Naive thymus-derived CD4-positive, alpha-beta T cell (primary cell): ENCODE measurements at regions of chr21 and their contacts with region 1.

Region 1: DNA sequence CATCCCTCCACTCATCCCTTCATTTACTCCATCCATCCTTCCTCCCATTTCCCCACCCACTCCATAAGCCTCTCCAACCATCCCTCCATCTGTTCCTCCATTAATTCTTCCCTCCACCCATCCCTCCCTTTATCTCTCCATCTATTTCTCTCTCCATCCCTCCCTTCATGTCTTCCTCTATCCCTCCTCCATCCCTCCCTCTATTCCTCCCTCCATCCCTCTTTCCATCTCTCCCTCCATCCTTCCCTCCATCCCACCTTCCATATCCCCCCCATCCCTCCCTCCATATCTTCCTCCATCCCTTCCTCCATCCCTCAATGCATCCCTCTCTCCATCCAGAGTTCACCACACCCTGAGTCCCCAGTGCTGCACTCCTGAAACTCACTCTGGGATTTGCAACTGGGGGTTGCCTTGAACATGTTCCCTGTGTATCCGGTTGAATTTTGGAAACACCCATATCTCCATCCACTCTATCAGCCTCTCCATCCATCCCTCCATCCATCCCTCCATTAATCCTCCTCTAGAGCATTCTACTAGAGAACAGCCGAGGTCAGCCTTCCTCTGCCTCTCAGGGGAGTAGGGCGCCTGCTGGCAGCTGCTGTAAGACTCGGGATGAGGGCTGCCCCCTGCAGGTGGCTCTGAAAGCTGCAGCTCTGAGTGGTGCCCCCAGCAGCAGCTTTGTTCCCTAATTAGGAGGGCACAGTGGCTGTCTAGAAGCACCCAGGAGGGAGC is 39.4 kb downstream of the ABCG1 start:
- DNase-seq: peak; percentile 66 to 87 (median 77)
- ATAC-seq: peak; percentile 94
- H3K4me3 ChIP-seq: no peak overlapping the region
- H3K4me3 Mint-ChIP-seq: no peak overlapping the region
- H3K27ac ChIP-seq: no peak overlapping the region
- H3K27ac Mint-ChIP-seq: peak overlapping the region in 4 of 9 donors; percentile 12 to 59 (median 45)
- H3K4me1 ChIP-seq: no peaks in the 10 kb centered on the region
- H3K4me1 Mint-ChIP-seq: peaks cover 20 to 46% (median 35%) of the 10 kb centered on the region in 7 donors
- H3K27me3 ChIP-seq: no peaks in the 10 kb centered on the region
- H3K27me3 Mint-ChIP-seq: peaks cover 0 to 5% (median 0%) of the 10 kb centered on the region in 5 donors

Region 2: GRCh38 chr21:42164064-42164789 is 94.1 kb before region 1 on chr21:
- CTCF ChIA-PET with region 1: interaction called, 32 read pairs
- POLR2A ChIA-PET with region 1: no interaction called
- intact Hi-C with region 1: loop called (anchors 1 kb)
- DNase-seq: peak in 7 of 9 donors; percentile 18 to 50 (median 44)
- ATAC-seq: peak; percentile 80
- H3K4me3 ChIP-seq: no peak overlapping the region
- H3K4me3 Mint-ChIP-seq: no peak overlapping the region
- H3K27ac ChIP-seq: no peak overlapping the region
- H3K27ac Mint-ChIP-seq: peak overlapping the region in 5 of 9 donors; percentile 9 to 77 (median 64)
- H3K4me1 ChIP-seq: peaks cover 7 to 30% of the 10 kb centered on the region in 2 donors
- H3K4me1 Mint-ChIP-seq: peaks cover 27 to 56% (median 45%) of the 10 kb centered on the region in 7 donors
- H3K27me3 ChIP-seq: no peaks in the 10 kb centered on the region
- H3K27me3 Mint-ChIP-seq: peaks cover 0 to 7% (median 0%) of the 10 kb centered on the region in 5 donors

Region 3: DNA sequence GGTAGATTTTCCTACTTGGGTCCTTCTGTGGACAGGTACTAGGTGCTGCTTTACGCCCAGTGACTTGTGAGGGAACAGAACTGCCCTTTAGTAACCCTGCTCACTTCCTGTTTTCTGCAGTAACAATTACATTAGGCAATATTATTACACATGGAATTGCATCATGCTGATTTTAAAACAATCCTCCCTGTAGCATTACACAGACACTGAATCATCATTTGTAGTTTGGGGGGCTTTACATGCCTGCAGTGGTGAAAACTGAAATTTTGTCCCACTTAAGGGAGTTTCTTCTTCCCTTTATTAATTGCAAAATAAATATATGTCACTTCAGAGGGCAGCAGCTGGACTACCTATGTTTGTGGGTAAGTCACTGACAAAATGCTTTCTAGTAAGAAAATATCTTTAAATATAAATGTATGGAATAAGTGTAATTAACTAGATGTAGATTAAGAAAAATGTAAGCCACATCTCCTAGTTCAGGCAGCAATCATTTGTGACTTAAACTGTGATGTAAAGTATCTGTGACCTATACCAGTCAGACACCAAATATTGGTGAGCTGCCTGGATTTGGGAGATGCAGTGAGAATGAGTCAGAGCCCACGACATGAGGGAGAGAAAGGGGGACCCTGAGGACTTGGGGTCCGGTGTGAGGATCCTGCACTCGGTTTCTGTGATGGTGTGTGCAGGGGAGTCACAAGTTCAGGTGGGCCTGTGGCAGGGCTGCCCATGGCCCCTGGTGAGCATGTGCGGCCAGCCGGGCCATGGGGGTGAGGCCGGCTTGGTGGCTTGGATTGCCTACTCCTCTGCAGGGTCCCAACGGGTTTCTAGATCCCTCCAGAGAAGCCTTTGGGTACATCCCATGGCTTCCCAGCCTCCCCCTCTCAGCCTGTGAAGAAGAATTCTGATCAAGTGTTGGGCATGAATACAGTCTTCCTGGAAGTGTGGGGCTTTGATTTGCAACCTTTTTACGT is 58.5 kb before region 1 on chr21:
- CTCF ChIA-PET with region 1: interaction called, 4 read pairs
- POLR2A ChIA-PET with region 1: no interaction called
- intact Hi-C with region 1: loop called in 1 of 2 experiments (anchors 1 kb)
- DNase-seq: peak in 7 of 9 donors; percentile 33 to 64 (median 49)
- ATAC-seq: peak; percentile 86
- H3K4me3 ChIP-seq: no peak overlapping the region
- H3K4me3 Mint-ChIP-seq: peak overlapping the region; percentile 34 to 73 (median 66)
- H3K27ac ChIP-seq: peak overlapping the region; percentile 38
- H3K27ac Mint-ChIP-seq: peak overlapping the region; percentile 13 to 95 (median 87)
- H3K4me1 ChIP-seq: peaks cover 25 to 39% of the 10 kb centered on the region in 2 donors
- H3K4me1 Mint-ChIP-seq: peaks cover 37 to 85% (median 75%) of the 10 kb centered on the region in 7 donors
- H3K27me3 ChIP-seq: no peaks in the 10 kb centered on the region
- H3K27me3 Mint-ChIP-seq: peaks cover 0 to 16% (median 0%) of the 10 kb centered on the region in 5 donors

Region 4: DNA sequence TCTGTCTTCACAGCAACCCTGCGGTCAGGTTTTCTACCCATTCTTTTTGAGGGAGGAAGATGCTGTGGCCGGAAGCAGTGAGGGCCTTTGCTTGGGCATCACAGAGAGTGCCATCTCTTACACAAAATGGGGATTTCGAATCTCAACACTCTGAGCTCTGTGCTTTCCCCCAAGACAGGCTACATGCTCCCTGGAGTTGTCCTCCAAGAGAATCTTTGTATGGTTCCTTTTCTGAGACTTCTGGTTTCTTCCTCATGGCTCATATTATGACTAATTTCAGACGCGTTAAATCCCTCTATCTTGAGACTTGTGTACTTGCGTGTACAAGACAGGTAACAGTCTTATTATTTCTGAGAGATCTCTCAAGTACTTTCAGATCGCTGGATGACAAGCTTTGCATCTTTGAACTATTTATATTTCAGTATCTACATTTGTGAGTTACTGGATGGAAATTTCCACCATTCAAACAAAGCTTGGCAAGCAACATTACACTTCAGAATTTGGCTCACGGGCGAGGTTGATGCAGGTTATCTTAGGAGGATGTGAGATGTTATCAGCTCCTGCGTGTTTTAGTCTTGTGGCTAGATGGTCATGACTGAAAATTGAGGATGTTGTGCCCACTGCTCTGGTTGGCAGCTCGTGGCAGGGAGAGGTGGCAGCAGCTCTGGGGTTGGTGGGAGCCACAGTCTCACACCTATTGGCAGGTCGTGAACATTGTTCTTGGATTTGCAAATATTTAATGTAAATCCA is 20.0 kb before region 1 on chr21:
- CTCF ChIA-PET with region 1: interaction called, 39 read pairs
- POLR2A ChIA-PET with region 1: interaction called, 4 read pairs
- intact Hi-C with region 1: loop called (anchors 1 to 2 kb)
- DNase-seq: peak in 7 of 9 donors; percentile 59 to 82 (median 76)
- ATAC-seq: peak; percentile 44
- H3K4me3 ChIP-seq: no peak overlapping the region
- H3K4me3 Mint-ChIP-seq: peak overlapping the region; percentile 58 to 86 (median 74)
- H3K27ac ChIP-seq: peak overlapping the region; percentile 48
- H3K27ac Mint-ChIP-seq: peak overlapping the region; percentile 52 to 99 (median 83)
- H3K4me1 ChIP-seq: peaks cover 58 to 61% of the 10 kb centered on the region in 2 donors
- H3K4me1 Mint-ChIP-seq: peaks cover 52 to 80% (median 63%) of the 10 kb centered on the region in 7 donors
- H3K27me3 ChIP-seq: no peaks in the 10 kb centered on the region
- H3K27me3 Mint-ChIP-seq: no peaks in the 10 kb centered on the region

Region 5: DNA sequence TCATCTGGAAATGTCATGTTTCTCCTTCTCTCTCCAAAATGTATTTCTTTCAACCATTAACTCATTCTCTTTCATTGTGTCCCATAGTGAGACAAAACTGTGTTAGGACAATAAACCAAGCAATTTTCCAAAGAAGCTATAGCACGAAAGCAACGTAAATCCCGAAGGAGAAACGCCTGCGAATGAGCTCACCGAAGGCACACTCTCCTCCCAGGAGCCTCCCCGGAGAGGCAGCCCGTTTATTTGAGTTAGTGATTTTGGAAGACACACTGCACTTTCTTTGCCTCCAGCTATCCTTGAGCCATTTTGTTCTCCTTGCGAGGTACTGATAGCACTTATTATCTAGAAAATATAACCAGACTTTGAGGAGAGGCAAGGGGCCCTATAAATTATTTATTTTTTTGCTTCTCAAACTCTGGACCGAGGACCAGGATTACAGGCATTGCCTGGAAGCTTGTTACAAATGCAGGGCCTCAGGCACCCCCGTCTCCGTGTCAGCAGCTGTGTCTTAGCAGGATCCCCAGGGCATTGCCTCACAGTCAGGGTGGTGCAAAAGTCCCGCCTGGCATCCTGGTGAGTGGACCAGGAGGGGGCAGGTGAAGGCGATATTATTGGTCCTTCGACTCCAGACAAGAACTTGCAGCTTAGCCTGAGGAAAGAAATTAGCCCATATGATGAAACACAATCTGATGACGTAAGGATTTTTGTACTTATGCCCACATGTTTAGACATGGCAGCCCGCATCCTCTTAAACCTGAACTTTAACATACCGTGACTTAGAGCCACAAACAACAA is 196.7 kb after region 1 on chr21:
- CTCF ChIA-PET with region 1: no interaction called
- POLR2A ChIA-PET with region 1: no interaction called
- intact Hi-C with region 1: loop called in 1 of 2 experiments (anchors 1 kb)
- DNase-seq: no peak
- ATAC-seq: no peak
- H3K4me3 ChIP-seq: no peak overlapping the region
- H3K4me3 Mint-ChIP-seq: peak overlapping the region in 1 of 10 donors; percentile 17
- H3K27ac ChIP-seq: no peak overlapping the region
- H3K27ac Mint-ChIP-seq: peak overlapping the region in 2 of 9 donors; percentile 32 to 45
- H3K4me1 ChIP-seq: peaks cover 0 to 17% of the 10 kb centered on the region in 2 donors
- H3K4me1 Mint-ChIP-seq: peaks cover 19 to 61% (median 48%) of the 10 kb centered on the region in 7 donors
- H3K27me3 ChIP-seq: no peaks in the 10 kb centered on the region
- H3K27me3 Mint-ChIP-seq: no peaks in the 10 kb centered on the region